Activated T-helper 1 cell treated with anti-CD3 and anti-CD28 coated beads, Interleukin-12 subunit alpha, Interleukin-12 subunit beta, Interleukin-2, Interleukin-4 antibody, amounts not matched to agents 30 ng/mL and 10 ng/mL and 1 ng/mL, durations not matched to agents 14 hours and 24 hours and 36 hours (primary cell): ENCODE measurements at regions of chr16 and their contacts with region 1.

Region 1: DNA sequence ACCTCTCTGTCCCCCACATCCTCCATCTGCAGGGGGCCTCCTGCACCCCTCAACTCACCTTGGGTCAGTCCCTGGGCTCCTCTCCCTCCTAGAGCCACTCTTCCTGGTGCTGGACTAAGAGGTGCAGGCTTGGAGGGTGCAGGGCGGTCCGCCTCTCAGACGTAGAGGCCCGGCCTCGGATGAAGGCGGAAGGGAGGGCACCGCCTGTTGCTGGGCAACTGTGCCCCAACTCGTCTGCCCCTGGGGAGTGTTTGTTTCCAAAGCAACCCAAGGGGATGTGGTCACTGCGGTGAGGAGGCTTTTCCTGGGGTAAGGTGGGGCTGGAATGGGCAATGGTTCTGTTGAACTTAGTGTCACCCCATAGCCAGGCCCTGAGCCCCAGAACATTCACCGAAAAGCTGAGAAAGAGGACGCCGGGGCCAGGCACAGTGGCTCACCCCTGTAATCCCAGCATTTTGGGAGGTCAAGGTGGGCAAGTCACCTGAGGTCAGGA is at the start of gene C16orf54:
- DNase-seq: peak; percentile 89
- H3K4me3 Mint-ChIP-seq: peak within 1 kb of the TSS; percentile 97
- H3K27ac Mint-ChIP-seq: peak within 1 kb of the TSS; percentile 97
- H3K4me1 Mint-ChIP-seq: peaks cover 49% of the 10 kb centered on the region
- H3K27me3 Mint-ChIP-seq: no peaks in the 10 kb centered on the region
- total RNA-seq, gene C16orf54: 21.3 and 24.6 TPM in 2 replicates

Region 2: GRCh38 chr16:29784901-29785500 is 39.1 kb after region 1 on chr16:
- intact Hi-C with region 1: loop called (anchors 1 kb)
- DNase-seq: peak; percentile 69
- H3K4me3 Mint-ChIP-seq: peak overlapping the region; percentile 28
- H3K27ac Mint-ChIP-seq: no peak overlapping the region
- H3K4me1 Mint-ChIP-seq: peaks cover 24% of the 10 kb centered on the region
- H3K27me3 Mint-ChIP-seq: peaks cover 5% of the 10 kb centered on the region

Region 3: DNA sequence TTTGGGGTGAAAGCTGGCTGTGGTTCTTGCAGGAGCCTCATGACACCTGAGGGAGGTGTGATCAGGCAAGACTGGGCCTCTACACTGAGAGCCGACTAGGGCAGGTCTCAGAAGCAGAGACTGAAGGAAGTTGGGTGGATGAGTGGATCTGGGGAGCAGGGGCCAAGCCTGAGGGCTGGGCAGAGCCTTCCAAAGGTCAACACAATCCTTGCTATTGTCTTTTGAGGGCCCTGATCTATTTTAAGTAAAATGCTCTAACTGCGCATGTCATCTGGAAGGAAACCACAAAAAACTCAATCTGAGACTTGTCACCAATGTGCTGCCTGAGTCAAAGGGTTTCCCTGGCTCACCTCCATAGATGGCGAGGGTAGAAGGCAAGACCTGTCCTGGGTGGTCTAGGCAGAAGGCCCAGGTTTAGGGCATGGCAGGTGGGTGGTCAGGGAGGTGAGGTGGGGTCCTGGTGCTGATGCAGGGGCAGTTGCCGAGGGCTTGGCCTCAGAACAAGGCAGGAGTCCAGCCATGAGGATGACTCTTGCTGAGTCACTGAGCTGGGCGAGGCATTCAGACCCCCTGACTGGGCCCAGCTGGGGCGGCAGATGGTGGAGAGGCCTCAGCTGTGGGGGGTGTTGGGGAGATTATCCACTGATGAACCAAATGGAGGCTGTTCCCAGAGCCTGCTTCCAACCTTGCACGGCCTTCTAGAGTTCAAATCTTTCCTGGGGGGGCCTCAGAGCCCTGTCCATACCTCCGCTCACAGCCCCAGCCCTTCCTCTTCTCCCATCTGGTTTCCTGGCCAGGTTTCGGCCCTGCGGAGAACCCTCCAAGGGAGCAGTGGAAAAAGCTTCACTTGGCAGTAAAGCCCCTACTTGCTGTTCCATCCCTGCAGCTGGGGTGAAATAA is 79.5 kb after region 1 on chr16:
- intact Hi-C with region 1: loop called (anchors 5 kb)
- DNase-seq: peak; percentile 50
- H3K4me3 Mint-ChIP-seq: peak overlapping the region; percentile 68
- H3K27ac Mint-ChIP-seq: peak overlapping the region; percentile 85
- H3K4me1 Mint-ChIP-seq: peaks cover 42% of the 10 kb centered on the region
- H3K27me3 Mint-ChIP-seq: no peaks in the 10 kb centered on the region